Activated naive CD4-positive, alpha-beta T cell treated with anti-CD3 and anti-CD28 coated beads for 36 hours (primary cell): ENCODE measurements at regions of chr18 and their contacts with region 1.

Region 1: GRCh38 chr18:5159080-5159479 is 38.0 kb downstream of the AKAIN1 start:
- DNase-seq: peak; percentile 37
- H3K4me3 Mint-ChIP-seq: peak overlapping the region; percentile 41
- H3K27ac Mint-ChIP-seq: peak overlapping the region; percentile 80
- H3K4me1 Mint-ChIP-seq: peaks cover 35% of the 10 kb centered on the region
- H3K27me3 Mint-ChIP-seq: no peaks in the 10 kb centered on the region

Region 2: DNA sequence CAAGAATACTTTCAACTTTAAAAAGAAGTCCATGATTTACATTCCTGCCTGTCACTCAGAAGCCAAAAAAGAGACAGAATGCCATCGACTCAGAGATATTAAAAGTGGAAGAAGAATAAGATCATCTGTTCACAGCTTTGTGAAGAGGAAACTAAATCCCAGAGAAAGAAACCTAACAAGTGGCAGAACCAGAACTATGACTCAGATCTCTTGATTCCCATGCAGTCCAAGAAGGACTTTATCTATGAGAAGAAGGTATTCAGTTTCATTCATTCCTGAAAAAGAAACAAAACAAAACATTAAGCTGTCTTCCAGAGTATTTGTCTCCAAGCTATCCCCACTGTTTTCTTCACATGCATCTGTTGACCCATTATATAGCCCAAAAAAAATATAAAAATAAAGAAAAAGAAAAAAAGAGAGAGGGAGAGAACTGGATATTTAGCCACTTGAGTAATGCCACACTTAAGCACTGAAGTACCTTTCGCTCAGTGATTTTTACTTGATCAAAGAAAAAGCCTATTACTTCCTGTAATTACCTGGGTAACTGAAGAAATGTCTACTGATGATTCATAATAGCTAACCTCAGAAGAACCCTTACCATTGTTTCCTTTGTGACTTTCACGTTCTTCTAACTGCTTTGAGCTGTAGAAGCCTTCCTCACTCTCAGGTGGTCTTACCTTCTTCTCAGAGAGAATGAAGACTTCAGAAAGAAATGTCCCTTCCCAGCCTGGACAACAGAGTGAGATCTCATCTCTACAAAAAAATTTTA is 55.7 kb after region 1 on chr18:
- CTCF ChIA-PET with region 1: no interaction called
- intact Hi-C with region 1: loop called (anchors 2 kb)
- DNase-seq: no peak
- H3K4me3 Mint-ChIP-seq: no peak overlapping the region
- H3K27ac Mint-ChIP-seq: peak overlapping the region; percentile 10
- H3K4me1 Mint-ChIP-seq: peaks cover 20% of the 10 kb centered on the region
- H3K27me3 Mint-ChIP-seq: no peaks in the 10 kb centered on the region

Region 3: GRCh38 chr18:5630057-5630899 is 471.2 kb after region 1 on chr18:
- CTCF ChIA-PET with region 1: no interaction called
- intact Hi-C with region 1: loop called (anchors 10 kb)
- DNase-seq: peak; percentile 56
- H3K4me3 Mint-ChIP-seq: peak overlapping the region; percentile 69
- H3K27ac Mint-ChIP-seq: no peak overlapping the region
- H3K4me1 Mint-ChIP-seq: no peaks in the 10 kb centered on the region
- H3K27me3 Mint-ChIP-seq: peaks cover 30% of the 10 kb centered on the region